Spleen (tissue), 13 donors: ENCODE measurements at regions of chr19 and their contacts with region 1.

Region 1: DNA sequence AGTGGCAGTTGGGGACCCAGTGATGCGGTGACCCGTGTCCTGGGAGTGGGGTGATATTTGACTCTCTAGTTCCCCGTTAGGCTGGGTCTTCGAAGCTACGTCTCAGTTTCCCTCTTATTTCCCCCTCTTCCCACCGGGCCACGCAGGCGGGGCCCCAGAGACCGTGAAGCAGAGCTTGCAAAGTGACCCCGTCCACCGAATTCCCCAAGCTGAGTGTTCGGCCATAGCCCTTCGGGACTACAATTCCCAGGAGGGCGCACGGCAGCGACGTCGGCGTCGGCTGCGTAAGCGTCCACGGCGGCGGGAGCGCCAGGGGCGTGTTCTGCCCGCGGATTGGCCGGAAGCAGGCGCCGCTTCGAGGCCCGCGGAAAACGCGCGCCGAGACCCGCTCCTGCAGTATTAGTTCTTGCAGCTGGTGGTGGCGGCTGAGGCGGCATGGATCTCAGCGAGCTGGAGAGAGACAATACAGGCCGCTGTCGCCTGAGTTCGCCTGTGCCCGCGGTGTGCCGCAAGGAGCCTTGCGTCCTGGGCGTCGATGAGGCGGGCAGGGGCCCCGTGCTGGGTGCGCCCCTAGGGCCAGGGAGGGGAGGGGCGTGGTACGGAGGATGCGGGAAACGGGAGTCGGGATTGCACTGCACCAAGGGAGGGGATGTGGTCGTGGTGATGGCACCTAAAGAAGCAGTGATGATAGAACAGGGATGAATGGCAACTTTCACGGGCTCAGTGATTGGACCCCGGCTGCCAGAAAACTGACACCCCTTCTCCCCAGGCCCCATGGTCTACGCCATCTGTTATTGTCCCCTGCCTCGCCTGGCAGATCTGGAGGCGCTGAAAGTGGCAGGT is at the start of gene RNASEH2A:
- DNase-seq: peak; percentile 98
- H3K4me3 ChIP-seq: peak within 1 kb of the TSS; percentile 57 to 82 (median 67)
- H3K27ac ChIP-seq: peak within 1 kb of the TSS; percentile 3 to 83 (median 71)
- H3K4me1 ChIP-seq: peaks cover 13 to 36% (median 27%) of the 10 kb centered on the region in 6 donors
- H3K27me3 ChIP-seq: peaks cover 0 to 14% (median 0%) of the 10 kb centered on the region in 7 donors
- CTCF ChIP-seq: peak in 5 of 11 experiments; percentile 15 to 44 (median 40)
- POLR2A ChIP-seq: no peak
- total RNA-seq, gene RNASEH2A: 9.8 to 15.9 (median 11.7) TPM

Region 2: DNA sequence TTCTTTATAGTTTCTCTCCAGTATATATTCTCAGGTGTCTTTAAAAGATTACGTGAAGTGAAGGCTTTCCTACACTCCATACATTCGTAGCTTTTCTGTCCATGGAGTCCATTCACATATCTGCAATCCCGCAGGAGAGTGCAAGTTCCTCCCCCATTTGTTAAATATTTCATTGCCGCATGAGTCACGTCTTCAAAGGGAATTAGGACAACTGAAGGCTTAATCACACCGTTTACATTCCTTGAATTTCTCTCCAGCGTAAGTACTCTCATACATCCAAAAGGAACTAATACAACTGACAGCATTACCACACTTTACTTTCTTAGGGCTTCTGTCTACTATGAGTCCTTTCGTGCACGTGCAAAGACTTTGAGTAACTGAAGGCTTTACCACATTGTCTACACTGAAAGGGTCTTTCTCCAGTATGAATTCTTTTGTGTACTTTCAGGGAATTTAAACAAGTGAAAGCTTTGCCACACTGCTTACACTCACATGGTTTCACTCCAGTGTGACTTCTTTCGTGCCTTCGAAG is 226.2 kb before region 1 on chr19:
- intact Hi-C with region 1: no loop called
- DNase-seq: no peak
- H3K4me3 ChIP-seq: no peak overlapping the region
- H3K27ac ChIP-seq: no peak overlapping the region
- H3K4me1 ChIP-seq: no peaks in the 10 kb centered on the region
- H3K27me3 ChIP-seq: no peaks in the 10 kb centered on the region
- CTCF ChIP-seq: no peak
- POLR2A ChIP-seq: no peak

Region 3: DNA sequence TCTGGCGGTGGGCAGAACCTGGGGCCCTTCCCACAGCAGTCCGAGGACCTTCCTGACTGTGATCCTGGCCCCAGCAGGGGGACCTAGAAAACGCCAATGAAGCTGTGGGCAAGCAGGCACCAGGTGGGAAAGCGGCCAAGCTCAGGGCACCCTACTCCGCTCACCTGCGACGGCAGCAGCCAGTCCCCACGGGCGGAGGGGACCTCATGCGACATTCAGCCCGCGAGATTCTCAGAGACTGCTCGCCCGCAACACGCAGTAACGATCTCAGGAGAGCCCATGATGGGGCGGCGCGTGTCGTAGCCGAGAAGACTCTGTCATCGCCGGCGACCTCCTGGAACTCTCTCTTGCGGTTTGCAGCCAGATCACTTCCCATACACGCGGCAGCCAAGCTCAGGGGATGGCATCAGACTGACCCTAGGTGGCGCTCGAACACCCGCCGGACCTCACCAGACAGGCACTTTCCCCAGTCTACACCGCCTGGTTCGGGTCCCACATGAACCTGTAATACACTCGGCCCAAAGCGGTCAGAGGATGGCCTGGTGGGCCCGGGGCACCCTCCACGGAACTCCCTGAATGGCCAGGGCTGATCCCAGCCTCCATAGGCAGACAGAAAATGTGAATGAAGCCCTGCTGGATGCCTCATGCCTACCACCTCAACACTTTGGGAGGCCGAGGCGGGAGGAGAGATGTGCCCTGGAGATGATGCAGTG is 166.4 kb before region 1 on chr19:
- intact Hi-C with region 1: no loop called
- DNase-seq: peak; percentile 95
- H3K4me3 ChIP-seq: peak overlapping the region in 5 of 8 donors; percentile 4 to 60 (median 25)
- H3K27ac ChIP-seq: peak overlapping the region in 3 of 8 donors; percentile 2 to 56 (median 50)
- H3K4me1 ChIP-seq: peaks cover 0 to 14% (median 12%) of the 10 kb centered on the region in 6 donors
- H3K27me3 ChIP-seq: no peaks in the 10 kb centered on the region
- CTCF ChIP-seq: peak; percentile 71 to 95 (median 88)
- POLR2A ChIP-seq: no peak

Region 4: DNA sequence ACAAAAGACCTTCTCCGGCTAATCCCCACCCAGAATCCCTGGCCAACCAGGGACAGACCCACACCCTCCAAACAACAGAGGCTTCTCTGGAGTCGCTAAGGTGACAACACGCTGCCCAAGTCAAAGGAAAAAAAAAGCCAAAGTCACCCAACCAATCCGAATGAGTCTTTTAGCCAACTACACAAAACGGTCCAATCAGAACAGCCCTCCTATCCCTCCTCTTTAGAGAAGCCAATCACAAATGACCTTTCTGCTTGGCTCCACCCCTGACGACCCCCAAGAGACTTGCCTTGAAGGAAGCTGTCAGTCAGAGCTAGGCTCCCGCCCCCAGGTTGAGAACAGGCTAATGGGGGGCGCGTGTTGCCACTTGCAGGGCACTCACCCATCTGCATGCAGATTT is 103.4 kb before region 1 on chr19:
- intact Hi-C with region 1: no loop called
- DNase-seq: no peak
- H3K4me3 ChIP-seq: no peak overlapping the region
- H3K27ac ChIP-seq: no peak overlapping the region
- H3K4me1 ChIP-seq: peaks cover 0 to 6% (median 0%) of the 10 kb centered on the region in 6 donors
- H3K27me3 ChIP-seq: no peaks in the 10 kb centered on the region
- CTCF ChIP-seq: no peak
- POLR2A ChIP-seq: no peak

Region 5: DNA sequence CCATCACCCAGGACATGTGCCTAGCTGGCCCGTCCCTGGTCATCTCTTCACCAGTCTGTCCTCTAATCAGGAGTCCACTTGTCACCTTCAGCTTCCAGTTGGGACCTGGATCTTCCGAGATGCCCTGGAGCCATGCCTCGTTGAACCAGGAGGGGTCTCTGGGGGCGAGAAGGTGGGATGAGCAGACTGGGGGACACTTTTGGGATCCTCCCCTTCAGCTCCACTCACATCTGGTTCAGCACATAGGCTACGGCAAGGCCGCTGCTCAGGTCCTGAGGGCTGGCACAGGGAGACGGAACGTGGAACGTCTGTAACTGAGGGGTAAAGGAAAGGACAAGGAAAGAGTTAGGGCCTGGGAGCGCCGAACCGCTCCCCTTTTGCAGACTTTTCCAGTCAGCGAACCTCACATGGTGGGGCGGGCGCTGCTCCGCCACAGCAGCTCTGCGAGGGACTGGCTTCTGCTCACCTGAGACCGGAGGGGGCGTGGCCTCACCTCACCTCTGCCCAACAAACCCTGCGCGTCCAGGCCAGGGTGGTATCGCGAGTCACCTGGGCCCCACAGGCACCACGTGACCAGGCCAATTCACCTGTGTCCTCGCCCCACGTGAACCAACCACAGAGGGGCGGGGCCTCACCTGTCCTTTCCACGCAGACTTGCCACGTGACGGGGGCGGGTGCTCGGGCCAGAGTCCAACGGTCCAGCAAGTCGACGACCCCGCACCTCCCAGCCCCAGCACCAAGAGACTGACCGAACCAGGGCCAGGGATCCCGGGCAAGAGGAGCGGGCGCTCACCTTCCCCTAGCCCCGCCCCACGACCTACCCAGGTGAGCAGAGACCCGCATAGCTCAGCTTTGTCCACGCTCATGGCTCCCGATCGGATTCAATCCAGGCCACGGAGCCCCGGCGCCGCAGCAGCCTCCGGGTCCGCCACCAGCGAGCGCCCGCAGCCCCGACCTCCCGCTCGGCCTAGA is 31.6 kb before region 1 on chr19 and contains the start of gene HOOK2:
- intact Hi-C with region 1: loop called (anchors 5 kb)
- DNase-seq: peak; percentile 93
- H3K4me3 ChIP-seq: peak within 1 kb of the TSS; percentile 53 to 76 (median 62)
- H3K27ac ChIP-seq: peak within 1 kb of the TSS; percentile 72 to 98 (median 76)
- H3K4me1 ChIP-seq: peaks cover 23 to 48% (median 43%) of the 10 kb centered on the region in 6 donors
- H3K27me3 ChIP-seq: no peaks in the 10 kb centered on the region
- CTCF ChIP-seq: no peak
- POLR2A ChIP-seq: no peak
- total RNA-seq, gene HOOK2: 14.8 to 27.4 (median 25.2) TPM